Ovary (tissue), 10 donors: ENCODE measurements at regions of chr11 and their contacts with region 1.

Region 1: GRCh38 chr11:9314291-9315036 is at the start of gene TMEM41B:
- DNase-seq: peak; percentile 97 to 98 (median 98)
- H3K4me3 ChIP-seq: peak within 1 kb of the TSS; percentile 96
- H3K27ac ChIP-seq: peak within 1 kb of the TSS; percentile 3 to 34
- H3K4me1 ChIP-seq: peaks cover 9% of the 10 kb centered on the region
- H3K27me3 ChIP-seq: no peaks in the 10 kb centered on the region
- CTCF ChIP-seq: no peak
- EP300 ChIP-seq: no peak
- POLR2A ChIP-seq: peak; percentile 44
- total RNA-seq, gene TMEM41B: 15.4 to 29.4 (median 20.0) TPM

Region 2: DNA sequence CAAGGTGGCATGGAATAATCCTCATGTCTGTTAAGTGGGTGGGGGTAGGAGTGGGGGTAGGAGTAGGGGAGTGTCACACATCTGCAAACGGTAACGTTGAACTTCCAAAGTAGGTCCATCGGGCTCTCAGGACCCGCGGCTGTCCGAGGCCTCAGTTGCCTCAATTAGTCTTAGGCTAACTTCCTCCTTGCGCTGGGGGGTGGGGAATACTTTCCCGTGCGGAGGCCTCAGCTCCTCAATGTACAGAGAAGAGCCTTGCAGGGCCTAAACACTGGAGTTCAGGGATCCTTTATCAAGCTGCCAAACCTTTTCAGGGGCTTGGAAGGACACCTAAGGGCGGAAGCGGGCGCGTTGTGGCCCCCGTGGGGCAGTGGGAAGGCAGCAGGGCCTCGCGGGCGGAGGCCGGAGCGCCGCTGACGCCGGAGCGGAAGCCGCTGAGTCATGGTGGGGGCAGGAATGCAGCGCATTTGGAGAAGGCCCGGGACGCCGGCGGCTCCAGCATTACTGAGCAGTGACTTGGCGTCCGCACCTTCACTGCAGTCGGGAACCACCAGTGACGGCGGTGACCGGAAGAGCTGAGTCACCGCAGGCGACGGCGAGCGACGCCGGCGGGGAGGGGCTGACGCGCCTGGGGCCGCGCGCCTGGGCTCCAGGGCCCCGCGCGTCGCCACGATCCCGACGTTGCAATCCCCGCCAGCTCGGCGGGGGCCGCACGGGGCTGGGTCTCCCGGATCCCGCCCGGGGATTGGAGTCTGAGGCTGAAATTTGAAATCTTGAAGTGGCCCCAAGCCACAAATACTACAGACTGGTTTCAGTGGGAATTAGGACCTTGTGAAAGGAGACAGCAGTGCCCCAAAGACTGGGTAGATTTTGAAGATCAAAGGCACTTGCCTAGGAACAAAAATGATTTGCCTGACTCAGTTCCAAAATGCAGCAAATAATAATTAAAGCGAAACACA is 49.8 kb after region 1 on chr11:
- intact Hi-C with region 1: loop called in 1 of 4 experiments (anchors 1 kb)
- DNase-seq: peak; percentile 88 to 94 (median 89)
- H3K4me3 ChIP-seq: peak overlapping the region; percentile 52
- H3K27ac ChIP-seq: peak overlapping the region; percentile 74 to 77
- H3K4me1 ChIP-seq: peaks cover 4% of the 10 kb centered on the region
- H3K27me3 ChIP-seq: no peaks in the 10 kb centered on the region
- CTCF ChIP-seq: no peak
- EP300 ChIP-seq: peak; percentile 78
- POLR2A ChIP-seq: peak; percentile 69

Region 3: GRCh38 chr11:9489080-9489765 is 174.8 kb after region 1 on chr11:
- intact Hi-C with region 1: no loop called
- DNase-seq: no peak
- H3K4me3 ChIP-seq: no peak overlapping the region
- H3K27ac ChIP-seq: no peak overlapping the region
- H3K4me1 ChIP-seq: no peaks in the 10 kb centered on the region
- H3K27me3 ChIP-seq: no peaks in the 10 kb centered on the region
- CTCF ChIP-seq: no peak
- EP300 ChIP-seq: no peak
- POLR2A ChIP-seq: no peak